ENCODE measurements at regions of chr16 and their contacts with region 1.

Region 1: DNA sequence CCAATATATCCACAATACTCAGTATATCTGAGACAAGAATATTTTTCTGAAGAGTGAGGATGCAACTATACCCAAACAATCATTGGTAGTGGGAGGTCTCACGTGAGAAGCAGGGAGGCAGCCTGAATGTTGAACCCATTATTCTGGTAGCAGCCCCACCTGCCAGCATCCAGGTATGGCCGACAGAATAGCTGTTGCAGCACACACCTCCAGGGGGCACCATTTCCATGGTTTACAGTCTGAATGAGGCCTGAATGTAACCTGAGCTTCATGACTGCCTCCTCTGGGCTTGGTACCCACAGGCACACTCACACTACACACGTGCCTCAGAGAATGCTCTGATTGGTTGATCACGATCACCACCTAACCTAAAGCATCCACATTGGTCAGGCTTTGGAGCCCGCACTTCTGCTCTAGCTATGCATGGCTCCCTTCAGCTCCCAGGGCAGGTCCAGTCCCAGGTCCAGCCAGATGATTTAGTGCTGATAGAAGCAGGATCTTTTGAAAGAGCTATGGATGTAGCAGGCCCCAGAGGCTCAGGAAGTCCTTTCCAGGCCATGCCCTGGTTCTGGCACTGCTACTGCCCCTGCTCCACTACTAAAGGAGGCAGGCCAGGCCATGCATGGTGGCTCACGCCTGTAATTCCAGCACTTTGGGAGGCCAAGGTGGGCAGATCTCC is 11.0 kb upstream of the CBFB start:
- DNase-seq: peak; percentile 29 to 46
- ATAC-seq: peak in 2 of 8 donors; percentile 20 to 28
- H3K4me3 ChIP-seq: no peak overlapping the region
- H3K27ac ChIP-seq: no peak overlapping the region
- H3K4me1 ChIP-seq: peaks cover 6 to 30% (median 17%) of the 10 kb centered on the region in 9 donors
- H3K27me3 ChIP-seq: peaks cover 0 to 26% (median 0%) of the 10 kb centered on the region in 7 donors
- CTCF ChIP-seq: peak; percentile 18 to 69 (median 51)

Region 2: DNA sequence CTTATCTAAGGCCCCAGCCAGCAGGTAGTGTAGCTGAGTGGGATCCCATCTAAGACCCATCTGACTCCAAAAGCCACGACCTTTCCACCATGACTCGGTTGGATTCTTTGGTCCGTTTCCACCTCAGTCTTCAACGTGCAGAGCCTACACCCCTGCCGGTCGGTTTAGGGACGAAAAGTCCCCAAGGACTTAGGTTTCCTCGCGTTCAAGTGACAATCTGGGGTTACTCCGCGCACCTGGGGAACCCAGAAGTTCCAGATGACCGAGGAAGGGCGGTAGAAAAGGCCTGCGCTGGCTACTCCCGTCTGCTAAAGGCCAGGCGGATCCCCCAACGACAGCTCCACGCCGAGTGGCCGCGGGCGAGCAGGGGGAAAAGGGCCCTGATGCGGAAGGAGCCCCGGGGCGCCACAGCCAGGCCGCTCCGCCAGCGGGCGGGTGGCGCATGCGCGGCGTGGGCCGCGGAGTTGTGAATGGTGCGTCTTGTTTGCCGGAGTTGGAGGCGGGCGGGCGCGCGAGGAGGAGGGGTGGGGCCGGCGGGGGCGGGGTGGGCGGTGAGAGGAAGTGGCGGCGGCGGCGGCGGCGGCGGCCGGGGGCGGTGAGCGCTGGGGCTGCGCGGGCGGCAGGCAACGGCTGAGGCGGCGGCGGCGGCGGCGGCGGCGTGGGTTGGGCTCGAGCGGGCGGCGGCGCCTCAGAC is 10.8 kb after region 1 on chr16 and contains the start of gene CBFB:
- intact Hi-C with region 1: loop called in 1 of 10 experiments (anchors 2 kb)
- DNase-seq: peak; percentile 91 to 94
- ATAC-seq: peak; percentile 90 to 95 (median 94)
- H3K4me3 ChIP-seq: peak within 1 kb of the TSS; percentile 85 to 99 (median 96)
- H3K27ac ChIP-seq: peak within 1 kb of the TSS; percentile 93 to 100 (median 99)
- H3K4me1 ChIP-seq: peaks cover 3 to 39% (median 26%) of the 10 kb centered on the region in 9 donors
- H3K27me3 ChIP-seq: no peaks in the 10 kb centered on the region
- CTCF ChIP-seq: no peak
- total RNA-seq, gene CBFB: 22.2 to 36.4 (median 29.8) TPM

Region 3: DNA sequence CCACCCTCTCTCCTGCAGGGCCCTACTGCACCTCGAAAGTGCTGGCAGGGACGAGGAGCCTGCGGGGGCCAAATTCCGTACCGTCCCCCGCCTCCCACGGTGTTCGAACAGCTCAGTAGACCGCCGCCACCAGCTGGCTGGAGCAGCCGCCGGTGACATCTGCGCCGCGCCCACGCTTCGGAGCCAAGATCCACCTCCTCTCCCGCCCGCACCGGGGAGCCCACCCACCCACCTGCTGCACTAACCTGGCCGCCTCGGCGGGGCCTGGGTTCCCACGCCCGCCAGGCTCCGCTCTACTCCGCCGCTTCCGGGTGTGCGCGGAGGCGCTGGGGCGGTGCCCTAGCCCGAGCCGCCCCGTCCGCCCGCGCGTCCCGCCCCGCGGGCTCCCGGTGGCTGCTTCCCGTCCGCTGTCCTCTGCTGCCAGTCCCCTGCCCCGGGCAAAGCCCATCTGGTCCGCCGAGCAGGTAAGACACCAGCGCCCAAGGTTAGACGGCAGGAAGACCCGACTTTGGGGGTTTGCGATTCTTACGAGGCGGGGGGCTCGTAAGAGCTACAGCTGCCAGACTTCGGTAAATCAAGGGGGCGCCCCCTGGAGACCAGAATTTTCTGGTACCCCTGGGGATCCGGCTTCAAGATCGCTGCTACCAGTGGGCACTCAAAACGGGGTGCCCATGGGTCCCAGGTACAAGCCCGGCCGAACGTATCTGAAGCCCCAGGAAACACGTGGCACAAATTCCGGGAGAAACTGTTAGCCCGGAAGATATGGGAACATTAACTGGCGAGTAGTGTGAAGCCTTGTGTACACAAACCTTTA is 141.9 kb after region 1 on chr16 and contains the starts of genes FBXL8 and TRADD:
- intact Hi-C with region 1: loop called in 2 of 10 experiments (anchors 5 to 10 kb)
- DNase-seq: peak; percentile 68 to 79
- ATAC-seq: peak; percentile 68 to 84 (median 73)
- H3K4me3 ChIP-seq: peak within 1 kb of the TSS; percentile 81 to 99 (median 91)
- H3K27ac ChIP-seq: peak within 1 kb of the TSS; percentile 3 to 95 (median 86)
- H3K4me1 ChIP-seq: peaks cover 34 to 71% (median 59%) of the 10 kb centered on the region in 9 donors
- H3K27me3 ChIP-seq: peaks cover 0 to 36% (median 18%) of the 10 kb centered on the region in 7 donors
- CTCF ChIP-seq: peak in 7 of 9 donors; percentile 0 to 59 (median 47)
- total RNA-seq, gene FBXL8: 3.9 to 10.5 (median 5.0) TPM
- total RNA-seq, gene TRADD: 4.8 to 12.4 (median 5.7) TPM